Panc1 (cell line): ENCODE measurements at regions of chr10 and their contacts with region 1.

Region 1: DNA sequence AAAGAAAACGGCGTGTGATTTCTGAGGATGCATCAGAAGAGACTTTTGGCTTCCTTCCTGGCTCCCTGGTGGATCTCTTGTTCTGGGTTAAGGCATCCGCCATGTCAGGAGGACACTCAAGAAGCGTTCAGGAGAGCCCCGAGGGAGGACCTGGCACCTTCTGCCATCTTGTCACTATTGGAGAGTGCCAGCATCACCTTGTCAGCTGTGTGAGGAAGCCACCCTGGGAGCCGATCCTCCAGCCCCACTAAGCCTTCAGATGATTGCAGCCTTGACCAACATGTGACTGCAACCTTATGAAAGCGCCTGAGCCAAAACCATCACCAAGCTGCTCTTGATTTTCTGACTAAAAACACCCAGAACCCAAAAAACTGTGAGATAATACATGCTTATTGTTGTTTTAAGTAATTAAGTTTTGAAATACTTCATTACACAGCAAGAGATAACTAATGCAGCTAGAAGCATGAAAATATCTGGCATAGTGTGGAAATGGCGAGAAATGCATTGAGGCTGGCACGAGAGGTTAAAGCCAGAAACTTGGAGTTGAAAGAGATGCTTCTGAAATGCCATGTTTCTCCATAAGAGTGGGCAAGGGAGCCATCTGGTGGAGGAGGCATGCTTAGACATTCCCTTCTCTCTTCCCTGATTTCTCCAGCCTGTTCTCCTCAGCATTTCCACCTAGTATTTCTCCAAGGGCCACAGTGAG is 5.4 kb upstream of the ZFYVE27 start:
- DNase-seq: peak; percentile 82
- ATAC-seq: peak; percentile 90
- H3K4me3 ChIP-seq: no peak overlapping the region
- H3K27ac ChIP-seq: no peak overlapping the region
- H3K4me1 ChIP-seq: no peaks in the 10 kb centered on the region; the same call in 1 of the 2 replicates
- H3K27me3 ChIP-seq: no peaks in the 10 kb centered on the region
- CTCF ChIP-seq: peak; percentile 93

Region 2: GRCh38 chr10:97483506-97483905 is 248.0 kb before region 1 on chr10:
- CTCF ChIA-PET with region 1: no interaction called
- POLR2A ChIA-PET with region 1: no interaction called
- in situ Hi-C with region 1: no loop called
- intact Hi-C with region 1: no loop called
- DNase-seq: no peak
- ATAC-seq: no peak
- H3K4me3 ChIP-seq: no peak overlapping the region
- H3K27ac ChIP-seq: no peak overlapping the region
- H3K4me1 ChIP-seq: peaks cover 10% of the 10 kb centered on the region
- H3K27me3 ChIP-seq: no peaks in the 10 kb centered on the region
- CTCF ChIP-seq: no peak

Region 3: DNA sequence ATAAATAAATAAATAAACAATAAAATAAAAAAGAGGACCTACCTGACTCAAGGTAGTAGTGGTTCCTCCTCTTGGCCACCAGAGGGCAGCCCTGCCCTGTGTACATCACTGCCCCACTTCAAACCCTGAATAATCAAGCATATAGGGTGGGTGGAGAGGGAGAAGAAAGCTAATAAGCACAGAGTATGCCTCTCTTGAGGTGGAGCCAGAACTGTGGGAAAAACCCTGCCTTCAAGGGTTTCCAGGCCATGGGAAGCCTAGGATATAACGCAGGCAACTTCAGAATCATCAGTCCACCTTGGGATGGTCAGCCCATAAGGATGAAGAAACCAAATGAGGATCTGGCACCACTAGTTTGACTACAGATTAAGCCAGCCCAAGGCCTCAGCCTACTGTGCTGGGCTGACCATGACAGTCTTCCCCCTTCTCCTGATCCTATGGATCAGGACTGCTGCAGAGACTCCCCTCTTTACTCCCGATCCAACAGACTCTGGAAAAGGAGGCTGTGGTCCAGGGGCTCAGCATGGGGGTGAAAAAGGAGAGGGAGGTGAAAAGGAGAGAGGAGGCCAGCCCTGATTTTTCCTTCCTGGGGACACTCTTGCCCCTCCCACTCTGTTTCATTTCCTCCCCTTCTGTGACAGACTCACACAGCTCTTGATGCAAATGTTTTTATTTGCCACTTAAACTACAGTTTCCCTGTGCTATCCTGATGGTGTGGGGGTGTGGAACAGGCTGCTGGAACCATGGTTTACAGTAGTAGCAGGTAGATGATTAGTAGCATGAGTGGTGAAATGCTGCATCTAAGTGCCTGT is 54.5 kb before region 1 on chr10:
- CTCF ChIA-PET with region 1: no interaction called
- POLR2A ChIA-PET with region 1: no interaction called
- in situ Hi-C with region 1: no loop called
- intact Hi-C with region 1: loop called (anchors 2 kb)
- DNase-seq: peak; percentile 35
- ATAC-seq: peak; percentile 83
- H3K4me3 ChIP-seq: no peak overlapping the region
- H3K27ac ChIP-seq: no peak overlapping the region
- H3K4me1 ChIP-seq: no peaks in the 10 kb centered on the region
- H3K27me3 ChIP-seq: no peaks in the 10 kb centered on the region
- CTCF ChIP-seq: peak; percentile 97

Region 4: GRCh38 chr10:97686962-97687784 is 44.3 kb before region 1 on chr10 and contains the start of gene AVPI1:
- CTCF ChIA-PET with region 1: no interaction called
- POLR2A ChIA-PET with region 1: no interaction called
- in situ Hi-C with region 1: loop called (anchors 5 kb)
- intact Hi-C with region 1: no loop called
- DNase-seq: peak; percentile 87
- ATAC-seq: peak; percentile 92
- H3K4me3 ChIP-seq: peak within 1 kb of the TSS; percentile 72 to 73
- H3K27ac ChIP-seq: peak within 1 kb of the TSS; percentile 95
- H3K4me1 ChIP-seq: peaks cover 35% of the 10 kb centered on the region
- H3K27me3 ChIP-seq: no peaks in the 10 kb centered on the region
- CTCF ChIP-seq: no peak
- total RNA-seq, gene AVPI1: 8.0 TPM

Region 5: DNA sequence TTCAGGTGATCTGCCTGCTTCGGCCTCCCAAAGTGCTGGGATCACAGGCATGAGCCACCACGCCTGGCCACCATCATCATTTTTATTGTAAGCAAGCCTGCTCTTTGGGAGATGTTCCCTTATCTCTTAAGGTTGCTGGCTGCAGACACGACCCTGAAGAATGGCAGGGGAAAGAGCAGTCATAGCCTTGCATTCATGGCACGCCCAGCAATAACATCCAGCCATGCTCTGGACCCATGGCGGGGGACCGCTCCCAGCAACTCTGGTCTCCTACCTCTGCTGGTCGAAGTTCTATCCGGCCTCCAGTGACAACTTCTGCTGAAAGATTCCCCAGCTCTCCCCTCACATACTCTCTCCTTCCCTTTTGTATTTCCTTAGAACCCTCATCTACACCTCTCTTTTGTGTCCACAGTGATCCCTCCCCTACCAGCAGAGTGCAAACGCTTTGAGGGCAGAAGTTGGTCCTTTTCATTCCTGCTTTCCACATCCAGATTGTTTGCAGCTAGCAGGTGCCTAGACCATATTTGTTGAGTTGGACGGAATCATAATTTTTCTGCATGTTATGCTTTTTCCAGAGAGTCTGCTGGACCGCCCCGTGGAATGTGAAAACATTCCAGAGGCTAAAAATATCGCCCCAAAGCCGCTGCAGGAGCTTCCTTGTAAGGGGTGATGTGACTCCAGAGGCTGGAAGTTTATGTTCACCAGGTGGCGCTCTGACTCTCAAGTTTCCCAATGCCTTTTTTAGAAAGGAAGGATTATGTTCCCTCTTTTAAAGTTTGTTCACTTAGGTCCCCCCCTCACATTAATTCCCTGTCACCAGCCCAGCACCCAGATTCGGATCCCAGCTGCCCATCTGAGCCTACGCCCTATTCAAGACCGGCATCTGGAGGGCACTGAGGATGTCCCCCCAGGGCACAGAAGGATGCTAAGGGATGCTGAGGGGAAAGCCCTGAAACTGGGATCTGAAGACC is 22.2 kb before region 1 on chr10:
- CTCF ChIA-PET with region 1: interaction called, 7 read pairs
- POLR2A ChIA-PET with region 1: interaction called, 3 read pairs
- in situ Hi-C with region 1: no loop called
- intact Hi-C with region 1: loop called (anchors 1 kb)
- DNase-seq: no peak
- ATAC-seq: no peak
- H3K4me3 ChIP-seq: no peak overlapping the region
- H3K27ac ChIP-seq: no peak overlapping the region
- H3K4me1 ChIP-seq: 0 out of 2 replicates have a peak, but pooled peaks cover 4% of the 10 kb centered on the region
- H3K27me3 ChIP-seq: no peaks in the 10 kb centered on the region
- CTCF ChIP-seq: peak; percentile 92

Region 6: GRCh38 chr10:97792141-97792721 is 60.7 kb after region 1 on chr10:
- CTCF ChIA-PET with region 1: interaction called, 12 read pairs
- POLR2A ChIA-PET with region 1: no interaction called
- in situ Hi-C with region 1: no loop called
- intact Hi-C with region 1: no loop called
- DNase-seq: peak; percentile 63
- ATAC-seq: peak; percentile 32
- H3K4me3 ChIP-seq: no peak overlapping the region
- H3K27ac ChIP-seq: no peak overlapping the region
- H3K4me1 ChIP-seq: no peaks in the 10 kb centered on the region
- H3K27me3 ChIP-seq: no peaks in the 10 kb centered on the region; the same call in 1 of the 2 replicates
- CTCF ChIP-seq: peak; percentile 99

Region 7: DNA sequence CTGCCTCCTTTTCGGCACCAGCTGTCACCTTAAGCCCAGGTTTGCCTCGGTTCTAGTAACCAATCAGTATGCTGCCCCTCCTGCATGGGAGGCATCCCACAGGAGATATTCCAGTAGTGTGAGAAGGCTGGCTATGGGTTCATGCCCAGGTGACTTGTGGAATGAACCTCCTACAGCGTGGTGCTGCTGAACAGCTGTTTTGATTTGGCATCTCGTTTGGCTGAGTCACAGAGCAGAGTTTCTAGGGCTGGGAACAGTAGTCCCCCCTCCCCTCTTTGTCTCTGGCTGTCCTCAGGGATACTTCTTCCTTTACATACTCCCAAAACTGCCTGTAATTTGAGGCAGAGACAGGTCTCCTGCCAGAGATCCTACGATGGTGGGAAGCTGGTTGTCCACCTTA is 419.0 kb after region 1 on chr10:
- CTCF ChIA-PET with region 1: no interaction called
- POLR2A ChIA-PET with region 1: no interaction called
- in situ Hi-C with region 1: no loop called
- intact Hi-C with region 1: no loop called
- DNase-seq: no peak
- ATAC-seq: no peak
- H3K4me3 ChIP-seq: no peak overlapping the region
- H3K27ac ChIP-seq: no peak overlapping the region
- H3K4me1 ChIP-seq: no peaks in the 10 kb centered on the region
- H3K27me3 ChIP-seq: no peaks in the 10 kb centered on the region
- CTCF ChIP-seq: no peak